ENCODE measurements at regions of chr14 and their contacts with region 1.

Region 1: DNA sequence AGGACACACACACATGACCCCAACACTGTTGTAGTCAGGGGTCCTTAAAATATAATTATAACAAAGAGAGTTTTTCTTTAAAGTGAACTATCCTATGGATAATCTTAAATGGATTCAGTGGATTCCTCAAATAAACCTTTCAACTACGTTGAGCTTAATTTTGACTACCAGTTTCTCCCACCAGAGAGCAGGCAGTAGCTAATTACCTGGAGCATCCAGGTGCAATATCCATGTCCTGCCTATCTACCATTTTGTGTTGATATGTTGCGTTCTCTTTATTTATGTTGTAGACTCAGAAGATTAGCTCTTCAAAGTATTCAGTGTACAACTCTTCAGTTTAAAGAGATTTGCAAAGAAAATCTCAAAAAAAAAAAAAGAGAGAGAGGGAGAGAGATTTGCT is 127.2 kb upstream of the GZMB start:
- DNase-seq: peak; percentile 28
- ATAC-seq: peak; percentile 71
- H3K4me3 ChIP-seq: no peak overlapping the region
- H3K27ac ChIP-seq: no peak overlapping the region
- H3K4me1 ChIP-seq: no peaks in the 10 kb centered on the region
- H3K27me3 ChIP-seq: no peaks in the 10 kb centered on the region; a peak in 1 of 5 replicates
- CTCF ChIP-seq: peak; percentile 56
- EP300 ChIP-seq: no peak
- POLR2A ChIP-seq: no peak
- RAD21 ChIP-seq: no peak

Region 2: GRCh38 chr14:25042362-25043299 is 281.5 kb after region 1 on chr14:
- CTCF ChIA-PET with region 1: interaction called, 3 read pairs
- POLR2A ChIA-PET with region 1: no interaction called
- in situ Hi-C with region 1: no loop called
- intact Hi-C with region 1: loop called (anchors 1 kb)
- DNase-seq: peak; percentile 75
- ATAC-seq: peak; percentile 63
- H3K4me3 ChIP-seq: no peak overlapping the region
- H3K27ac ChIP-seq: no peak overlapping the region
- H3K4me1 ChIP-seq: peaks cover 41% of the 10 kb centered on the region
- H3K27me3 ChIP-seq: no peaks in the 10 kb centered on the region
- CTCF ChIP-seq: peak; percentile 89
- EP300 ChIP-seq: no peak
- POLR2A ChIP-seq: no peak
- RAD21 ChIP-seq: peak; percentile 86

Region 3: GRCh38 chr14:26233118-26233517 is 1472.0 kb after region 1 on chr14:
- CTCF ChIA-PET with region 1: no interaction called
- POLR2A ChIA-PET with region 1: no interaction called
- in situ Hi-C with region 1: no loop called
- intact Hi-C with region 1: no loop called
- DNase-seq: no peak
- ATAC-seq: no peak
- H3K4me3 ChIP-seq: no peak overlapping the region
- H3K27ac ChIP-seq: no peak overlapping the region
- H3K4me1 ChIP-seq: no peaks in the 10 kb centered on the region
- H3K27me3 ChIP-seq: no peaks in the 10 kb centered on the region
- CTCF ChIP-seq: no peak
- EP300 ChIP-seq: no peak
- POLR2A ChIP-seq: no peak
- RAD21 ChIP-seq: no peak

Measured in HepG2 (cell line).